AG04449 (cell line): ENCODE measurements at regions of chr1 and their contacts with region 1.

Region 1: DNA sequence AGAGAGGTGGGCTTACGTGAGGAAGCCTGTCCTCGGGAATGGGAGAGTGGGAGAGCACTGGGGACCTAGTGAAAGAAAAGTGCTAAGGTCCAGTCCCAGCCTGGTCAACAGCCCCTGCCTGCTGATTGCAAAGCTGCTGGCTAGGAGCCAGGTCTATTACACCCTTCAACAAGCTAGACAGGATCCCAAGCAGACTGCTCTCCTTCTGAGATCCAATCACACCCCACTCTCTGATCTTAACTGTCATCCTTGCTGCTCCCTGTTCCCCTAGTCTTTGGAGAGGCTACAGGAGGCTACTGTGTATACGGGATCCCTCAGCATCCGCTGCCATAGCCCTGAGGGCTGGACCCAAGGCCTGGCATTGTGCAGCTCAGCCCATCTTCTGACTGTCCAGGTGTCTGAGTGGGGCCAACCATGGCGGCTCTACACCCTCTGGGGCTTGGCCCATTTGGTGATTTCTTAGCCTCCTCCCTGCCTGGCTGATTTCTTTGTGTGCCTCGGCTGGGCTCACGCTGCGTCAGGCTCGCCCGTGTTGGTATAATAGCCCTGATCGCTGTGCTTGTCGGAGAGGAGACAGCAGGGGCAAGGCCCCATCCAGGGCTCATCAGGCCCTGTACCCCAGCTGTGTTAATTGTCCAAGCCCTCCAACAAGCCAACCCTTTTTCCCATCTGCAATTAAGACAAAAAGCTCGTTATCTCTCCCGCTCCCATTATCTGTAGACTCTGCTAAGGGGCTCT is 43.9 kb downstream of the NAV1 start:
- DNase-seq: no peak
- H3K4me3 ChIP-seq: no peak overlapping the region
- CTCF ChIP-seq: no peak

Region 2: GRCh38 chr1:201602413-201603265 is 19.8 kb after region 1 on chr1:
- CTCF ChIA-PET with region 1: interaction called, 4 read pairs
- POLR2A ChIA-PET with region 1: interaction called, 10 read pairs
- DNase-seq: peak; percentile 87
- H3K4me3 ChIP-seq: no peak overlapping the region
- CTCF ChIP-seq: no peak

Region 3: GRCh38 chr1:201660931-201661822 is 78.3 kb after region 1 on chr1:
- CTCF ChIA-PET with region 1: no interaction called
- POLR2A ChIA-PET with region 1: no interaction called
- DNase-seq: no peak
- H3K4me3 ChIP-seq: no peak overlapping the region
- CTCF ChIP-seq: no peak